Tibial artery (tissue), 4 donors: ENCODE measurements at regions of chr5 and their contacts with region 1.

Region 1: GRCh38 chr5:31598640-31599611 is 40.0 kb upstream of the PDZD2 start:
- DNase-seq: no peak
- H3K4me3 ChIP-seq: no peak overlapping the region
- H3K27ac ChIP-seq: no peak overlapping the region
- H3K4me1 ChIP-seq: no peaks in the 10 kb centered on the region
- H3K27me3 ChIP-seq: peaks cover 0 to 6% of the 10 kb centered on the region in 2 donors
- CTCF ChIP-seq: no peak

Region 2: DNA sequence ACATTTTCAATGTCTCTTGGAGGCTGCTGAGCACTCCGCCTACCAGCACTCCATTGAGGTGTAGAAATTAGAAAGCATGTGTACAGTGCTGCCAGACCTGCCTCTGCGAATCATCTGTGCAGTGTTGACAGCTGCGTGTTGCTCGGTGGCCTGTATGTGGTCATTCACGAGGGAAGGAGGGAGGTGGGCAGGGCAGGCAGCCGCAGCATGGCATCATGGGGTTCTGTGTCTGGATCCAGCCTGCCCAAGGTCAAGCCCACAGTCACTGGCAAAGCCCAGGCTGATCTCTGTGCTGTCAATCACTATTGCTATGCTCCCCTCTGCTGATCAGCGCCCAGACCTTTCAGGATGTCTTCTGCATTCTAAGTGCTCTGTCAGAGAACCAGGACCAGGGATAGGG is 32.0 kb after region 1 on chr5:
- intact Hi-C with region 1: loop called (anchors 5 kb)
- DNase-seq: no peak
- H3K4me3 ChIP-seq: no peak overlapping the region
- H3K27ac ChIP-seq: no peak overlapping the region
- H3K4me1 ChIP-seq: no peaks in the 10 kb centered on the region
- H3K27me3 ChIP-seq: no peaks in the 10 kb centered on the region
- CTCF ChIP-seq: no peak

Region 3: GRCh38 chr5:31935702-31936369 is 336.9 kb after region 1 on chr5:
- intact Hi-C with region 1: no loop called
- DNase-seq: no peak
- H3K4me3 ChIP-seq: no peak overlapping the region
- H3K27ac ChIP-seq: no peak overlapping the region
- H3K4me1 ChIP-seq: peaks cover 0 to 12% (median 0%) of the 10 kb centered on the region in 4 donors
- H3K27me3 ChIP-seq: no peaks in the 10 kb centered on the region
- CTCF ChIP-seq: no peak